Endothelial cell of umbilical vein (primary cell): ENCODE measurements at regions of chr1 and their contacts with region 1.

Region 1: GRCh38 chr1:69976896-69977295 is 228.5 kb downstream of the LRRC40 start:
- DNase-seq: peak; percentile 73
- H3K4me3 ChIP-seq: no peak overlapping the region
- H3K27ac ChIP-seq: peak overlapping the region; percentile 41
- H3K4me1 ChIP-seq: peaks cover 15% of the 10 kb centered on the region
- H3K27me3 ChIP-seq: no peaks in the 10 kb centered on the region
- CTCF ChIP-seq: no peak
- POLR2A ChIP-seq: no peak

Region 2: DNA sequence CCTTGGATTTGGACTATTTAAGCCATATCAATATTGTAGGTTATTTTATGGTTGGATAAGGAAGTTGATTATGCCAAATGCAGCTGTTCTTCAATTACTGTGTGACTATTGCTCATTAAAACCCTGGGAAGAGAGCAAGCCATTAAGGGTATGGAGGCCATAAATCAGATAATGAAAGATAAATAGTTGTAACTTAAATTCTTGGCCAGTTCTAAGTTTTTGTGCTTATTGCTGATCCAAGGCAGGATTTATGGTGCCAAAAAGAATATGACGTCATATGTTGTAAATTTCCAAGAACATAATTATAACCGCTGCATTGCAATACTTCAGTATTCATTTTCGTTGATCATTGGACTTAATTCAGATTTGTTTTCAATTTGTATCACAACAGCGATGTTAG is 16.9 kb after region 1 on chr1:
- CTCF ChIA-PET with region 1: interaction called, 6 read pairs
- POLR2A ChIA-PET with region 1: no interaction called
- dilution Hi-C with region 1: no loop called
- intact Hi-C with region 1: loop called (anchors 2 kb)
- DNase-seq: peak; percentile 23
- H3K4me3 ChIP-seq: no peak overlapping the region
- H3K27ac ChIP-seq: no peak overlapping the region
- H3K4me1 ChIP-seq: peaks cover 9% of the 10 kb centered on the region
- H3K27me3 ChIP-seq: no peaks in the 10 kb centered on the region
- CTCF ChIP-seq: no peak
- POLR2A ChIP-seq: no peak